CD8-positive, alpha-beta T cell (primary cell): ENCODE measurements at regions of chr7 and their contacts with region 1.

Region 1: DNA sequence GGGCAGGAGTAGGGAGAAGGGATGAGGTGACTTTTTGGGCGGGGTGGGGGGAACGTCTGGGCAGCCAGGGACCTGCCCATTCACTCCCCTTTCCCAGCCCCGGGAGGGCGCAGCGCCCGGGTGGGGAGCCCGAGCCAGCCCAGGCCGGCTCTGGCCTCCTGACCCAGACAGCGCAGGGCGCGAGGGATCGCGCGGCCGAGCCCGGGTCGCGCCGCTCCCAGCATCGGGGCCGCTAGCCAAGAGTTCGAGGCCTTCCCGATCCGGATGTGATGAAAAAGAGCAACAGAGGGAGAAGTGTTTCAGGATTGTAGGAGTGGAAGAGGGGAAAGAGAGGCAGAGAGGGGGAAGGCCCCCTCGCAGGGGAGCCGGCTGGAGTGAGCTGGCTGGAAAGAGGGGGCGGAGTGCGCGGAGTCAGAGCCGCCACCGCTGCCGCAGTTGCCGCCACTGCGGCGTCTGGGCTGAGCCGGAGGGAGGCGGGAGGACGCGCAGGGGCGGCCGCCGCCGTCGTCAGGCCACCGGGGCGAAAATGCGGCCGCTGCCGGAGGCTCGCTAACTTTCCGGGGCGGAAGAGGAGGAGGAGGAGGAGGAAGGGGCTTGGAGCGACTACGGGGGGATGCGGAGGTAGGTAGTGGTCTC is at the start of gene MDFIC:
- DNase-seq: peak; percentile 11 to 78 (median 53)
- ATAC-seq: peak; percentile 54
- H3K4me3 ChIP-seq: peak within 1 kb of the TSS; percentile 65 to 91
- H3K4me3 Mint-ChIP-seq: peak within 1 kb of the TSS; percentile 93
- H3K27ac ChIP-seq: peak within 1 kb of the TSS; percentile 51 to 88
- H3K27ac Mint-ChIP-seq: peak within 1 kb of the TSS; percentile 90
- H3K4me1 ChIP-seq: peaks cover 20% of the 10 kb centered on the region
- H3K4me1 Mint-ChIP-seq: peaks cover 52% of the 10 kb centered on the region
- H3K27me3 ChIP-seq: no peaks in the 10 kb centered on the region
- H3K27me3 Mint-ChIP-seq: no peaks in the 10 kb centered on the region
- CTCF ChIP-seq: no peak
- total RNA-seq, gene MDFIC: 16.8 to 17.2 TPM

Region 2: DNA sequence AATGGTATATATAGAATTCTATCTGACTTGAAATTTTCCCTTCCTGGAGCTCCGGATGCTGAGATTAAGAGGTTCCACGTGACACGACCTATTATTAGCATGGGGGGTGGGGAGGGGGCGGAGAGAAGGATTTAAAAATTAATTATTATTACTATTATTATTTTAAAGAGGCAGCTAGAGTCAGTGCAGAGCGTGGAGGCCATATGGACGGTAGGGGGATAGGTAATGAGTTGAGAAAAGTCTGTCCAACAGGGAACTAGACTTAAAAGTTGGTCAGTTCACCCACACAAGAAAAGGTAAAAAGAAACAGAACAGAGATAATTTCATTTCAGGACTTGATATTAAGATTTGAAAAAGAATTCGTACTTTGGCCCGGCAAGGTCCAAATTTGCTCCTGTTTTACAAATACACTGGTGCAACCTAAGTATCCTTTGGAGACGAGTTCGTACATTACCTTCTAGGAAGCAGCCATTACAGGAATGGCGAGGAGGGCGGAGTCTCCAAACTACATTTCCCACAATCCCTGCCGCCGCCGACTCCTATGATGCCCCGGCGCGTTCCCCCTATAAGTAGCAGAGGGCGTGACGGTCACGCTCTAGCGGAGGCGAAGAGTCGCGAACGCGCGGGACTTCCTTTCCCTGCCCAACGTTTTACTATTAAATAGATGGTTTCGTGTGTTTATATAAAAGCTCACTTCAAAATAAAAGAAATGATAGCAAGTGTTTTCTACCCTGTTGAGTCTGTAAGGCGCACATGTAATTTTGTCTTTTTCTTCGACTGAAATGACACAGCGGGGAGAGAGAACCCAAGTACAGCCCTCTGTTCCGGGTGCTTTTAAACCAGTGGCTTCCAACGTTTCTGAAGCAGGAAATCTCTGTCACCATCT is 1803.8 kb before region 1 on chr7 and contains the start of gene SMIM30:
- CTCF ChIA-PET with region 1: no interaction called
- POLR2A ChIA-PET with region 1: no interaction called
- intact Hi-C with region 1: loop called in 1 of 2 experiments (anchors 10 kb)
- DNase-seq: peak; percentile 76 to 93 (median 90)
- ATAC-seq: peak; percentile 100
- H3K4me3 ChIP-seq: peak within 1 kb of the TSS; percentile 58 to 66
- H3K4me3 Mint-ChIP-seq: peak within 1 kb of the TSS; percentile 96
- H3K27ac ChIP-seq: peak within 1 kb of the TSS; percentile 55 to 73
- H3K27ac Mint-ChIP-seq: peak within 1 kb of the TSS; percentile 98
- H3K4me1 ChIP-seq: peaks cover 6% of the 10 kb centered on the region
- H3K4me1 Mint-ChIP-seq: peaks cover 21% of the 10 kb centered on the region
- H3K27me3 ChIP-seq: no peaks in the 10 kb centered on the region
- H3K27me3 Mint-ChIP-seq: no peaks in the 10 kb centered on the region
- CTCF ChIP-seq: no peak
- total RNA-seq, gene SMIM30: 3.5 to 4.8 TPM

Region 3: GRCh38 chr7:114959931-114960330 is 37.8 kb after region 1 on chr7:
- CTCF ChIA-PET with region 1: interaction called, 3 read pairs
- POLR2A ChIA-PET with region 1: interaction called, 4 read pairs
- intact Hi-C with region 1: loop called in 1 of 2 experiments (anchors 5 kb)
- DNase-seq: no peak
- ATAC-seq: no peak
- H3K4me3 ChIP-seq: no peak overlapping the region
- H3K4me3 Mint-ChIP-seq: no peak overlapping the region
- H3K27ac ChIP-seq: no peak overlapping the region
- H3K27ac Mint-ChIP-seq: peak overlapping the region; percentile 28
- H3K4me1 ChIP-seq: no peaks in the 10 kb centered on the region
- H3K4me1 Mint-ChIP-seq: peaks cover 61% of the 10 kb centered on the region
- H3K27me3 ChIP-seq: no peaks in the 10 kb centered on the region
- H3K27me3 Mint-ChIP-seq: no peaks in the 10 kb centered on the region
- CTCF ChIP-seq: no peak

Region 4: DNA sequence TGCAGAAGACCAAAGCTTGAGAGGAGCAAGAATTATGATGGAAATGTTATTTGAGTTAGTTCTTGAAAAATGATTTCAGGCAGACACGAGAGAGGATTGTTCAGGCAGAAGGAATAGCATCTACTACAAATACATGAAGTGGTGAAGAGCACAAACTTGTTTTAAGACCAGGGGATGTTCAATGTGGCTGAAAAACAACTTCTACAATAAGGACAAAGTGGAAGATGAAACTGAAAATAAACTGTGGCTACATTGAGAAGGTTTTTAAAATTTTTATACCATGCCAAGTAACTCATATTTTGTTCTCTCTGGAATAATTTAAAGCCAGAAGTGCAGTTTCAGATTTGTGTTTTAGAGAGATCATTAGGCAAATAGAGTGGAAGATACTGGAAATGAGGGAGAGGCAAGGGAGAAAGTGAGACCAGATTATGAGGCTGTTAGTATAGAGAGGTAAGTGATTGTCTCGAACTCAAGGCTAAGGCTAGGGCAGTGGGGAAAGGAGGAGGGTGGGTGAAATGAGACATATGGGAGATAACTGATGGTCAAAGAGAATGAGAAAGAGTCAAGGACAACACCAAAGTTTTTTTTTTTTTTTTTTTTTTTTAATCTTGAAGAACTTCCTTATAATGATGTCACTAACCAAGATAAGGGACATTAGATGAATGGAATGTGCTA is 115.1 kb after region 1 on chr7:
- CTCF ChIA-PET with region 1: no interaction called
- POLR2A ChIA-PET with region 1: no interaction called
- intact Hi-C with region 1: no loop called
- DNase-seq: no peak
- ATAC-seq: no peak
- H3K4me3 ChIP-seq: no peak overlapping the region
- H3K4me3 Mint-ChIP-seq: no peak overlapping the region
- H3K27ac ChIP-seq: no peak overlapping the region
- H3K27ac Mint-ChIP-seq: no peak overlapping the region
- H3K4me1 ChIP-seq: no peaks in the 10 kb centered on the region
- H3K4me1 Mint-ChIP-seq: peaks cover 3% of the 10 kb centered on the region
- H3K27me3 ChIP-seq: peaks cover 0 to 3% of the 10 kb centered on the region in 2 experiments
- H3K27me3 Mint-ChIP-seq: no peaks in the 10 kb centered on the region
- CTCF ChIP-seq: no peak

Region 5: GRCh38 chr7:116211006-116211912 is 1289.1 kb after region 1 on chr7:
- CTCF ChIA-PET with region 1: no interaction called
- POLR2A ChIA-PET with region 1: no interaction called
- intact Hi-C with region 1: loop called in 1 of 2 experiments (anchors 10 kb)
- DNase-seq: peak; percentile 62 to 94 (median 83)
- ATAC-seq: peak; percentile 77
- H3K4me3 ChIP-seq: peak overlapping the region; percentile 71 to 86
- H3K4me3 Mint-ChIP-seq: peak overlapping the region; percentile 98
- H3K27ac ChIP-seq: peak overlapping the region; percentile 91 to 93
- H3K27ac Mint-ChIP-seq: peak overlapping the region; percentile 99
- H3K4me1 ChIP-seq: peaks cover 50% of the 10 kb centered on the region
- H3K4me1 Mint-ChIP-seq: peaks cover 57% of the 10 kb centered on the region
- H3K27me3 ChIP-seq: no peaks in the 10 kb centered on the region
- H3K27me3 Mint-ChIP-seq: no peaks in the 10 kb centered on the region
- CTCF ChIP-seq: no peak

Region 6: DNA sequence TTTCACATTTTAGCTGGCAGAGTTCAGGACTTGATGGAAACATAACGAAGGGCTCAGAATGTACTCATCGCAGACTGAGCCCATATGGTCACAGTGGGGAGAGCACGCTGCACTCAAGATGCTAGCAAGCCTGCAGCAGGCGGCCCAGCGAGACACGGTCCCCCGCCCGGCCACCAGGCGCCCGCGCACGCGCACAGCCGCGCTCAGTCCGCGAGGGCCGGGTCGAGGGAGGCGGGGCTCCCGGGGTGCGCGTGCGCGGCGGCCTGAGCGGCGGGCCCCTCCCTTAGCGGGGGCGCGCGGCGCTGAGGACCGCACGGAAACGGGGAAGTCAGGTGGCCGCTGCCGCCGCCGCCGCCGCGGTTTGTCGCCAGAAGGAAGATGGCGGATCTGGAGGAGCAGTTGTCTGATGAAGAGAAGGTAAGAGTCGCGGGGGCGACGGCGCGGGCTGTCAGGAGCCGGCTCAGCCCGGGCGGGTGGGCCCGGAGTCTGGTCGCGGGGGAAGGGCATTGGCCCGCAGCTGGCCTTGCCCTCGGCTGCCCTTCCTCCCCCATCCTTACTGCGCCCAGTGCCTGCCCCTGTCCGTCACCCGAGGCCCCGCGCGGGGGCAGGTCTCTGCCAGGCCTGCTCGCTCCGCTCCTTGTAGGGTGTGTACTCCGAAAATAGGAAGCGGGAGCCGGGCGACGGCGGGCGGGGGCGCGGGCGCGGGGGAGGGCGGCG is 1940.3 kb after region 1 on chr7 and contains the start of gene CAPZA2:
- CTCF ChIA-PET with region 1: no interaction called
- POLR2A ChIA-PET with region 1: no interaction called
- intact Hi-C with region 1: loop called in 1 of 2 experiments (anchors 10 kb)
- DNase-seq: peak; percentile 88 to 97 (median 95)
- ATAC-seq: peak; percentile 89
- H3K4me3 ChIP-seq: peak within 1 kb of the TSS; percentile 73 to 79
- H3K4me3 Mint-ChIP-seq: peak within 1 kb of the TSS; percentile 96
- H3K27ac ChIP-seq: peak within 1 kb of the TSS; percentile 77 to 82
- H3K27ac Mint-ChIP-seq: peak within 1 kb of the TSS; percentile 96
- H3K4me1 ChIP-seq: peaks cover 15% of the 10 kb centered on the region
- H3K4me1 Mint-ChIP-seq: peaks cover 44% of the 10 kb centered on the region
- H3K27me3 ChIP-seq: no peaks in the 10 kb centered on the region
- H3K27me3 Mint-ChIP-seq: peaks cover 7% of the 10 kb centered on the region
- CTCF ChIP-seq: peak; percentile 42
- total RNA-seq, gene CAPZA2: 92.6 to 101 TPM